OCI-LY7 (cell line): ENCODE measurements at regions of chr1 and their contacts with region 1.

Region 1: GRCh38 chr1:3564921-3565827 is 46.1 kb downstream of the MEGF6 start:
- DNase-seq: peak; percentile 43
- H3K4me3 ChIP-seq: no peak overlapping the region
- H3K27ac ChIP-seq: no peak overlapping the region
- H3K4me1 ChIP-seq: no peaks in the 10 kb centered on the region
- CTCF ChIP-seq: peak; percentile 90

Region 2: DNA sequence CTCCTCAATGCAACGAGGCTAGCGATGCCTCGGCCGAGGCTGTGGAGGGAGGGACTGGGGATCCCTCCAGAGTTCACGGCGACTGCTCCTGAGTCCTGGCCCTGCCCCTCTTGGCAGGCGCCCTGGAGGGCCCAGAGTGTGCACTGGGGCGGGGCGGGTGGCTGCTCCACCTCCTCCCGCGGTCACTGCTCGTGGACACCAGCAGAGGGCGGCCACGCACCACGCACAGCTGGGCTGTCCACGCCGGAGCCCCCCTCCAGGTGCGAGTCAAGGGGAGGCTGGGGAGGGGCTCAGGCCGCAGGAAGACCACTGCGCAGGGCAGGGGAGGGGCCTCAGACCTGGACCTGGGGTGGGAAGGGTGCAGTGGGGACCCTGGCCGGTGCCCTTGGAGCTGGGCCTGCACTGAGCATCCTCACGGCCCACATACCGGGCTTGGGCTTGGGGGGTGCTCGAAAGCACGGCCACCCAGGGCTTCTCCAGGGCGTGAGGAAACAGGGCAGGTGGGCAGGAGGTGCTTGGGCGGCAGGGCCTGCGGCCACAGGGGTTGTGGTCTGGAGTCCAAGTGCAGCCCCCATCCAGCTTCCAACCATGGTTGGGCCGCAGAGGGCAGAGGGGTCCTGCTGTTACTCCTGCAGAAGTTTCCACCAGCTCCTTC is 743.1 kb before region 1 on chr1:
- CTCF ChIA-PET with region 1: no interaction called
- POLR2A ChIA-PET with region 1: no interaction called
- intact Hi-C with region 1: no loop called
- DNase-seq: peak; percentile 7
- H3K4me3 ChIP-seq: no peak overlapping the region
- H3K27ac ChIP-seq: no peak overlapping the region
- H3K4me1 ChIP-seq: no peaks in the 10 kb centered on the region
- CTCF ChIP-seq: peak; percentile 63

Region 3: DNA sequence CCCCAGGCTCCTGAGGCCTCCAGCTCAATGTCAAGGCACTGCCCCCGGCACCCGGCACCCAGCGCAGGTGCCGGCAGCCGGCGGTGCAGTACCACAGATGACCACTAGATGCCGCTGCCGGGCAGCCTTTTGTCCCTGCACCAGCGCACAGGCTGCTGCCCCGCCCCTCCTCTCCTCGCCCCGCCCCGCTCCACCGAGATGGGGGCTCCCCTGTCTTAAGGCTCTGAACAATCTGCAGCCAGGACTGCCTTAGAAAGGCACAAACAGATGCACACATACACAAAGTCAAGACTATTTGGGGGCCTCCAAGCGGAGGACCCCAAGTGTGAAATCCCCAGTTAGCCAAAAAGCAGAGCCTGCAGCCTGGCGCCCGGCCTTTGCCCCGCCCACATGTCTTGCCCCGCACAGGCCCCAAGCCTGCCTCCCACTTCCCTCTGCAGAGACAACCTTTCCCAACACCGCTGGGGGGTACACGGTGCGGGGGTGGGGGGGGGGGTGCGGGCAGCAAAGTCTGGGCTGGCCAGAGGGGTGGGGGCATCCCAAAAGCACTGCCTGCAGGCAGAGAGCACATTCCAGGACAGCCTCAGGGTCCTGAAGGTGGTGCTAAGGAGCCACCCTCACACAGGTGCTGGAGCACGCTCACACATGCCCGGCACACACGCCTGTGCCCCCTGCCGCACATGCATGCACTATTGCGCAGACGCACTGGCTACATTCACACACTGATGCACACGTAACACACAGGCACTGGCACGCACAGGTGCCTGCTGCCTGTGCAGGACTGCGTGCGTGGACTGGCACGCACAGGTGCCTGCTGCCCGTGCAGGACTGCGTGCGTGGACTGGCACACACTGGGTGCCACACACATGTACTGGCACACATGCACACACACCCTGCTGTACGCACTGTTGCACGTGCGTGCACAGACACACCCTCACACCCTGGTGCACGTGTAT is 73.6 kb before region 1 on chr1:
- CTCF ChIA-PET with region 1: no interaction called
- POLR2A ChIA-PET with region 1: no interaction called
- intact Hi-C with region 1: loop called (anchors 10 kb)
- DNase-seq: peak; percentile 73
- H3K4me3 ChIP-seq: peak overlapping the region; percentile 15
- H3K27ac ChIP-seq: no peak overlapping the region
- H3K4me1 ChIP-seq: no peaks in the 10 kb centered on the region
- CTCF ChIP-seq: peak; percentile 88

Region 4: DNA sequence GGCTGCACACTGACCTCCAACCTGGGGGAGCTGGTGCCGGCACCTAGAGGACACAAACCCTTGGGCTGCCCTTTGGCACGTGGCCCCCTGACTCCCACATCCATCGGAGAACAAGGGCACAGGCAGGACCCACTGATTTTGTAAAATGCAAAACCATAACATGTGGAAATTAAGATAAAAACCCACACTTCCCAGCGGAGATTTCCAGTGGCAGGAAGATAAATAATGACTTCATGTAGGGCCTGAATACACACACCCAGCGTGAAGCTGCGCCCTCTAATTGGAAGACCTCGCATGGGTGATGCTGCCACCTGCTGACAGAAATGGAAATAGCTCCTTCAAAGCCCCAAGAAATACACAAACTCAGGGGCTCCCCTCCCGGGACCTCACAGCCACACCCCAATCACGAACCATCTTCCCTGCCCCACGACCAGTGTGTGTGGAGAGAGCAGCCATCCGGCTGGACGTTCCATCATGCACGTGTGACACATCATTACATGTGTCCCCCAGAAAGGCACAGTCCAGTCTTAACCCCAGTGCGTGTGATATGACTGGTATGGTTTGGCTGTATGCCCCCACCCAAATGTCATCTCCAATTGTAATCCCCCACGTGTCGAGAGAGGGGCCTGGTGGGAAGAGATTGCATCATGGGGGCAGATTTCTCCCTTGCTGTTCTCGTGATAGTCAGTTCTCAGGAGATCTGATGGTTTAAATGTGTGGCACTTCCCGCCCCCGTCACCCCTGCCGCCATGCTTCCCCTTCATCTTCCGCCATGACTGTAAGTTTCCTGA is 53.9 kb after region 1 on chr1:
- CTCF ChIA-PET with region 1: interaction called, 3 read pairs
- POLR2A ChIA-PET with region 1: no interaction called
- intact Hi-C with region 1: loop called (anchors 1 kb)
- DNase-seq: peak; percentile 77
- H3K4me3 ChIP-seq: no peak overlapping the region
- H3K27ac ChIP-seq: no peak overlapping the region
- H3K4me1 ChIP-seq: peaks cover 12% of the 10 kb centered on the region
- CTCF ChIP-seq: peak; percentile 90

Region 5: DNA sequence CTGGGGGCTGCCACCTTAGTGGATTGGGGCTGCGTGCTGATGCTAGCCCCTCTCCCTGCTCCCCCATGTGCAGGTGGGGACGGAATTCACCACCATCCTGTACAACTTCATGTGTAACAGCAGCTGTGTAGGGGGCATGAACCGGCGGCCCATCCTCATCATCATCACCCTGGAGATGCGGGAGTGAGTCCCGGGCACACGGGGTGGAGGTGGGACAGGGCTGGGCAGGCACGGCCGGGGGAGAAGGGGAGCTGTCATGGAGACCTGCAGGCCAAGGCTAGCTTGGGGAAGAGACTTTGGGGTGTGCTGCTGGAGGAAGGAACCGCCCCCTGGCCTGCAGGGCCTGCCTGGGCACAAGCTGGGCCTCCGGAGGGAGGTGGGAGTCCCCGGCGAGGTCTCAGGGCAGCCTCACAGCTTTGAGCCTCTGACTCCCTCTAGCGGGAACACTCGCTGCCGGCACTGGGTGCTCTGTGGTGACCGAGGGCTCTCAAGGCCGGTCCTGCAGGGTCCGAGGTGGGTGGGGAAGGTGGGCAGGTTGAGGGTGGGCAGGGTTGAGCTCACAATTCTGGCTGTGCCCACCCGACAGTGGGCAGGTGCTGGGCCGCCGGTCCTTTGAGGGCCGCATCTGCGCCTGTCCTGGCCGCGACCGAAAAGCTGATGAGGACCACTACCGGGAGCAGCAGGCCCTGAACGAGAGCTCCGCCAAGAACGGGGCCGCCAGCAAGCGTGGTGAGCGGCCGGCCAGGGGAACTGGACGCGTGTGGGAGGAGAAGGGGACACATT is 162.1 kb after region 1 on chr1:
- CTCF ChIA-PET with region 1: no interaction called
- POLR2A ChIA-PET with region 1: no interaction called
- intact Hi-C with region 1: loop called (anchors 1 kb)
- DNase-seq: peak; percentile 40
- H3K4me3 ChIP-seq: no peak overlapping the region
- H3K27ac ChIP-seq: no peak overlapping the region
- H3K4me1 ChIP-seq: no peaks in the 10 kb centered on the region
- CTCF ChIP-seq: peak; percentile 68

Region 6: GRCh38 chr1:3746389-3746829 is 181.2 kb after region 1 on chr1:
- CTCF ChIA-PET with region 1: interaction called, 11 read pairs
- POLR2A ChIA-PET with region 1: no interaction called
- intact Hi-C with region 1: no loop called
- DNase-seq: no peak
- H3K4me3 ChIP-seq: no peak overlapping the region
- H3K27ac ChIP-seq: no peak overlapping the region
- H3K4me1 ChIP-seq: no peaks in the 10 kb centered on the region
- CTCF ChIP-seq: no peak